Activated CD4-positive, alpha-beta memory T cell treated with anti-CD3 and anti-CD28 coated beads for 36 hours (primary cell): ENCODE measurements at regions of chr2 and their contacts with region 1.

Region 1: GRCh38 chr2:172131713-172132555 is 29.2 kb upstream of the DLX2 start:
- DNase-seq: no peak
- H3K4me3 Mint-ChIP-seq: no peak overlapping the region
- H3K27ac Mint-ChIP-seq: no peak overlapping the region
- H3K4me1 Mint-ChIP-seq: no peaks in the 10 kb centered on the region
- H3K27me3 Mint-ChIP-seq: peaks cover 8% of the 10 kb centered on the region

Region 2: DNA sequence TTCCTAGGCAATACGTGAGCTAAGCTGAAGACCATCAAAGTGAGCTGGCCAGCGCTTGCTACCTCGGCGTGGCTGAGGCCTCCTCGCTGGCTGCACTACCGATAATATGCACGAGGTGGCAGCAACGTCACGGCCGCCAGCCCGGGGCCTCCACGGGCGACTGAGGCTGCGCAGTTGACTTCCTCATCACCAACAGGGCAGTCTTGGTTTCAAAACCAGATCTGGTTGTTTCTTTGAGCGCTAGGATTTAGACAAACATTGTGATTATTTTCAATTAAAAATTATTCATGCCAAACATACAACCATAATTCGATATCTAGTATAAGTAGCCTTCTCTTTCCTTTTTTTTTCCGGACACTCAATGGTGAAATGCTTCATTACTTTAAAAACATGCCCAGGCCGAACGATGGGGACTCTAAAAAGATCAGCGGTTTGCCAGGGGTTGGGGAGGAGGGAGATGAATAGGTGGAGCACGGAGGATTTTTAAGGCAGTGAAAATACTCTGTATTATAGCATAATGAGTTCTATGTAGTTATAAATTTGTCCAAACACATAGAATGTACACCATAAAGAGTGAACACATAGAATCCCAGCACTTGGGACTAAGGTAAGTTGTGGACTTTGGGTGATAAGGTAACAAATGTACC is 557.7 kb before region 1 on chr2:
- CTCF ChIA-PET with region 1: interaction called, 11 read pairs
- POLR2A ChIA-PET with region 1: no interaction called
- intact Hi-C with region 1: no loop called
- DNase-seq: peak; percentile 90
- H3K4me3 Mint-ChIP-seq: no peak overlapping the region
- H3K27ac Mint-ChIP-seq: no peak overlapping the region
- H3K4me1 Mint-ChIP-seq: peaks cover 7% of the 10 kb centered on the region
- H3K27me3 Mint-ChIP-seq: peaks cover 2% of the 10 kb centered on the region

Region 3: GRCh38 chr2:171598713-171599319 is 533.1 kb before region 1 on chr2:
- CTCF ChIA-PET with region 1: interaction called, 6 read pairs
- POLR2A ChIA-PET with region 1: no interaction called
- intact Hi-C with region 1: loop called (anchors 1 kb)
- DNase-seq: peak; percentile 47
- H3K4me3 Mint-ChIP-seq: no peak overlapping the region
- H3K27ac Mint-ChIP-seq: no peak overlapping the region
- H3K4me1 Mint-ChIP-seq: peaks cover 2% of the 10 kb centered on the region
- H3K27me3 Mint-ChIP-seq: peaks cover 4% of the 10 kb centered on the region

Region 4: GRCh38 chr2:171966268-171966667 is 165.7 kb before region 1 on chr2:
- CTCF ChIA-PET with region 1: no interaction called
- POLR2A ChIA-PET with region 1: no interaction called
- intact Hi-C with region 1: no loop called
- DNase-seq: no peak
- H3K4me3 Mint-ChIP-seq: no peak overlapping the region
- H3K27ac Mint-ChIP-seq: no peak overlapping the region
- H3K4me1 Mint-ChIP-seq: peaks cover 27% of the 10 kb centered on the region
- H3K27me3 Mint-ChIP-seq: no peaks in the 10 kb centered on the region

Region 5: GRCh38 chr2:172162739-172163336 is 30.9 kb after region 1 on chr2:
- CTCF ChIA-PET with region 1: no interaction called
- POLR2A ChIA-PET with region 1: no interaction called
- intact Hi-C with region 1: no loop called
- DNase-seq: no peak
- H3K4me3 Mint-ChIP-seq: no peak overlapping the region
- H3K27ac Mint-ChIP-seq: no peak overlapping the region
- H3K4me1 Mint-ChIP-seq: no peaks in the 10 kb centered on the region
- H3K27me3 Mint-ChIP-seq: no peaks in the 10 kb centered on the region